ENCODE measurements at regions of chr19 and their contacts with region 1.

Region 1: DNA sequence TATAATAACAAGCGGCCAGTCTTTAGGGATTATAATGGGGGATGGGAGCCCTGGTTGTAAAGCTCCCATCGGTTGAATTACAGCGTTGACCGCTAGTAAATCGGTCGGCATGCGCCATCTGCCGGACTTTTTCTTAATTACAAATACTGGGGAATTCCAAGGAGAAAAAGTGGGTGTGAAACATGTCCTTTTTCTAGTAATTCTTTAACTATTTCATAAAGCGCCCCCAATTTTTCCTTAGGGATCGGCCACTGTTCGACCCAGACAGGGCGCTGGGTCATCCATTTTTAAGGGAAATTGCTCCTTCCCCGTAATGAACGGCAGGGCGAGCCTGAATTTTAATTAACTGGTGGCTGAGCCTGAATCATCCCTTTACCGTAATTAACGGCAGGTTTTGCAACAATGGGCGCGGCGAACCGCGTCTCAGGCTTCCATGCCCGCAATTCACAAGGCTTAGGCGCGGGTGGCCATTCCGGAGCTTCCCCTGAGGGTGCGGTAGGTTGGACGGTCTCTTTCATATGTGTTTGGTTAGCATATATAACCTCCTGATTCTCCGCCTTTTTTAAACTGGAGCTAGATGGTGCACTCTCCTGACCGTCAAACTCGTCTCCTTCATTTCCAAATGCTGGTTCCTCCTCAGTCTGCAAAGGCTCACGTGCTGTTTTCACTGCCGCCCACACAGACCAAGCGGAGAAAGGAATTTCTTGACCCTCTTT is 30.2 kb upstream of the EVI5L start:
- DNase-seq: peak; percentile 81
- ATAC-seq: peak; percentile 72
- H3K4me3 Mint-ChIP-seq: peak overlapping the region; percentile 64
- H3K27ac Mint-ChIP-seq: no peak overlapping the region
- H3K4me1 Mint-ChIP-seq: peaks cover 21% of the 10 kb centered on the region
- H3K27me3 Mint-ChIP-seq: peaks cover 35% of the 10 kb centered on the region
- CTCF ChIP-seq: peak; percentile 57

Region 2: GRCh38 chr19:7589822-7590221 is 210.0 kb before region 1 on chr19:
- CTCF ChIA-PET with region 1: no interaction called
- POLR2A ChIA-PET with region 1: no interaction called
- DNase-seq: no peak
- ATAC-seq: no peak
- H3K4me3 Mint-ChIP-seq: no peak overlapping the region
- H3K27ac Mint-ChIP-seq: no peak overlapping the region
- H3K4me1 Mint-ChIP-seq: no peaks in the 10 kb centered on the region
- H3K27me3 Mint-ChIP-seq: peaks cover 15% of the 10 kb centered on the region
- CTCF ChIP-seq: no peak

Region 3: DNA sequence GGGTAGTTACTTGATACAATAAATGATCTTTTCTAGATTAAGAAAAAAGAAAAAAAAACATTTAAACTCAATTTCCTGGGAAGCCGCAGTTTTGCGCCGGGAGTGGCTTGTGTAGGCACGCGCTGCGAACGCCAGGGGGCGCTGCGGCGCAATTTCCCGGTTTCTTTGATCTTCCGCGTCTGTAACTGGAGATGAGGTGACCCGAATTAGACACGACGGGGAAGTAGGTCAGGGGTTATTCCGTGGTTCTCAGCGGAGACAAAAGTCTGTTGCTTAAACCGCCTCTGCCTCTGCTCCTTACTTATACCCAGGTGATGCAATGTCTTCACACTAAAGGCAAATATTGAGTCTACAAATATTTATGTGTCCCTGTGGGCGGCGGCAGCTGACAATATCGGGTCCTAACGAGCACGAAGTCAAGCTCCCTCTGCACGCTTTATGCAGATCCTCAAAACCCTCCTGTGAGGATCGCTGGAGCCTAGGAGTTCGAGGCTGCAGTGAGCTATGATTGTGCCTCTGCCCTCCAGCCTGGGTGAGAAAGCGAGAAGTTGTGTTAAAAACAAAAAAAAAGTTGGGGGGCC is 147.6 kb before region 1 on chr19:
- CTCF ChIA-PET with region 1: interaction called, 13 read pairs
- POLR2A ChIA-PET with region 1: no interaction called
- DNase-seq: peak; percentile 88
- ATAC-seq: peak; percentile 87
- H3K4me3 Mint-ChIP-seq: peak overlapping the region; percentile 44
- H3K27ac Mint-ChIP-seq: 0 out of 2 replicates have a peak overlapping the region, but pooled peaks have one; percentile 11
- H3K4me1 Mint-ChIP-seq: peaks cover 7% of the 10 kb centered on the region
- H3K27me3 Mint-ChIP-seq: peaks cover 59% of the 10 kb centered on the region
- CTCF ChIP-seq: peak; percentile 99

Region 4: GRCh38 chr19:7748770-7749209 is 51.0 kb before region 1 on chr19:
- CTCF ChIA-PET with region 1: interaction called, 10 read pairs
- POLR2A ChIA-PET with region 1: no interaction called
- DNase-seq: peak; percentile 62
- ATAC-seq: peak; percentile 99
- H3K4me3 Mint-ChIP-seq: no peak overlapping the region
- H3K27ac Mint-ChIP-seq: peak overlapping the region; percentile 57; the same call in 1 of the 2 replicates
- H3K4me1 Mint-ChIP-seq: peaks cover 20% of the 10 kb centered on the region
- H3K27me3 Mint-ChIP-seq: peaks cover 4% of the 10 kb centered on the region; the same call in 1 of the 2 replicates
- CTCF ChIP-seq: no peak

Region 5: GRCh38 chr19:7829561-7830271 is 29.9 kb after region 1 on chr19 and contains the start of gene EVI5L:
- CTCF ChIA-PET with region 1: interaction called, 19 read pairs
- POLR2A ChIA-PET with region 1: no interaction called
- DNase-seq: peak; percentile 99
- ATAC-seq: peak; percentile 92
- H3K4me3 Mint-ChIP-seq: peak within 1 kb of the TSS; percentile 91
- H3K27ac Mint-ChIP-seq: no peak within 1 kb of the TSS
- H3K4me1 Mint-ChIP-seq: peaks cover 14% of the 10 kb centered on the region
- H3K27me3 Mint-ChIP-seq: peaks cover 55% of the 10 kb centered on the region
- CTCF ChIP-seq: no peak
- total RNA-seq, gene EVI5L: 10.5 to 13.7 TPM (median 13.6 TPM) in 3 replicates

Region 6: DNA sequence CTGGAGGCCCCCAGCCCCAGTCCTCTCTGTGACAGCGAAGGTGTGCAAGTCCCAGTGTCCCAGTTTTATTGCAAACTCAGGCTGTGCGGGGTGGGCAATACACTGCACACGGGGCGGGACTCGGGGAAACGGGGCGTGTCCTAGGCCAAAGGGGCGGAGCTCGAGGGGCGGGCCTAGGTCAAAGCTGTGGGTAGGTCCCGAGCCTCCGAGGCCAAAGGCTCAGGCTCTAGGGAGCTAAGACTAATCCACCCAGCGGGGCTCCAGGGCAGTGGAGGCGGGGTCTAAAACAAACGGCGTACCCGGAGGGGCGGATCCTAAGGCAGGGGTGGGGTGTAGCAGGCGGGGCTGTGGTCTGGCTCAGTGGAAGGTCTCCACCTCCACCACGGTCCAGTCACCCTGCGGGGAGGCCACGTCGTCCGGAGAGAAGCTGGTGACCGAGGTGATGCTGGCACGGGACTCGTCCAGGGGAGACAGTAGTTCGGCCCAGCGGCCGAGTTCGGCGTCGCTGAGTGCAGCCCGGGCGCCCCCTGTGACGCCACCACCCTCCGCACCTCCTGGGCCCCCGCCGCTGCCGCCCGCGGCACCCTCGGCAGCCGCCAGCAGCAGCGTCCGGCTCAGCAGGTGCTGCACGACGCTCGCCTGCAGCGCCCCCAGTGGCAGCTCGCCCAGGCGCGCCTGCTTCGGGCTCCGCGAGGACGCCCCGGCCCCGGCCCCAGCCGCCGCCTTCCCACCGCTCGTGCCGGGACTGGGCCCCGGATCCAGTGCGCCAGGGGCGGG is 69.1 kb after region 1 on chr19:
- CTCF ChIA-PET with region 1: interaction called, 20 read pairs
- POLR2A ChIA-PET with region 1: no interaction called
- DNase-seq: peak; percentile 95
- ATAC-seq: peak; percentile 41
- H3K4me3 Mint-ChIP-seq: peak overlapping the region; percentile 63
- H3K27ac Mint-ChIP-seq: peak overlapping the region; percentile 78; the same call in 1 of the 2 replicates
- H3K4me1 Mint-ChIP-seq: peaks cover 28% of the 10 kb centered on the region
- H3K27me3 Mint-ChIP-seq: peaks cover 62% of the 10 kb centered on the region
- CTCF ChIP-seq: peak; percentile 77

Measured in WTC11 (cell line).